ENCODE measurements at regions of chr11 and their contacts with region 1.

Region 1: DNA sequence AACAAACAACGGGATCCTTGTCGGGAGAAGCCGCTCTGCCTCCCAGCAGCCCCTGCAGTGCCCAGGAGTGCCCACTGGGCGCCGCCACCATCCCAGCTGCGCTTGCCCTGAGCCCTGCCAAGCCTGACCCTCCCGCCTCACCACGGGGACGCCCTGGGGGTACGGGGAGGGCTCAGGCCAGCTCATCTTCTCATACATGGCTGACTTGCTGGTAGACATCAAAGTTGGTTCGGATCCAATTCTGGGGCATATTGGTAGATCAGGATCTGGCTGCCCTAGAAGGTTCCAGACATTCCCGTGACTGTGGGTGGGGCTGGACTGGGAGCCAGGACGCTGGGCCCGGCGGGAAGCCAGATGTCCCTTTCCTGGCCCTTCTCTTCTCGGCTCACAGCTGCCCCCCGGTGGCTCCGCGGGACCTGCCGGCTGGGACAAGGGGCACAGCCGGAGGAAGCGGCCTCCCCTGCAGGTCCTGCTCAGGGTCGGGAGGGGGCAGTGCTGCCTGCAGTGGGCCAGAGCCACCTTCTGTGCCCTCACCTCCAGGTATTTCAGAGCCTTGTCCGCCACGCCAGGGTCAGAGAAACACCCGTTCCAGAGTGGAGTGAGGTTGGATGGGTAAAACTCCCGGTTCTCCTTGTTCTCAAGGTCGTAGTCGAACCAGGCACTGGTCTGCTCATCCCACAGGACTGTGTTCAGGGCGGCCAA is 10.6 kb upstream of the TREH start:
- DNase-seq: peak; percentile 97
- H3K4me3 Mint-ChIP-seq: peak overlapping the region; percentile 25
- H3K27ac Mint-ChIP-seq: peak overlapping the region; percentile 67
- H3K4me1 Mint-ChIP-seq: peaks cover 23% of the 10 kb centered on the region
- H3K27me3 Mint-ChIP-seq: no peaks in the 10 kb centered on the region
- CTCF ChIP-seq: peak; percentile 85

Region 2: DNA sequence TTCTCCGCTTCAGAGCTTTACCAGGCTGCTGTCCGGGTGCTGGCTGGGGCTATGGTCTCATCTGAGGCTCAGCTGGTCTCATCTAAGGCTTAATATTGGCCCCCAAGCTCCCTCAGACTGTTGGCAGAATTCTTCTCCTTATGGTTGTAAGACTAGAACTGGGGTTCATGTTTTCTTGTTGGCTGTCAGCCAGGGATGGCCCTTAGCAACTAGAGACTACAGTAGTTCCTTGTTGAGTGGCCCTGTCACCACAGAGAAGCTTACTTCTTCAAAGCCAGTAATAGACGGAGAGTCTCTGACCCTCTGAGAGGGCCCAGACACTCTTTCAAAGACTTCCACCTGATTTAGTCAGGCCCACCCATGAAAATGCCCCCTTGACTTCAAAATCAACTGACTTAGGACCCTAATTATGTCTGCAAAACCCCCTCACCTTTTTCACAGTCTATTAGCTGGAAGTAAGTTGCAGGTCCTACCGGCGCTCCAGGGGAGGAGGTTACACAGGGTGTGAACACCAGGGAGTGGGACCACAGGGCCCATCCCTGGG is 13.6 kb after region 1 on chr11:
- CTCF ChIA-PET with region 1: interaction called, 7 read pairs
- POLR2A ChIA-PET with region 1: interaction called, 15 read pairs
- intact Hi-C with region 1: no loop called
- DNase-seq: no peak
- H3K4me3 Mint-ChIP-seq: no peak overlapping the region
- H3K27ac Mint-ChIP-seq: no peak overlapping the region
- H3K4me1 Mint-ChIP-seq: no peaks in the 10 kb centered on the region
- H3K27me3 Mint-ChIP-seq: no peaks in the 10 kb centered on the region
- CTCF ChIP-seq: no peak

Region 3: GRCh38 chr11:118757876-118758399 is 67.9 kb after region 1 on chr11:
- CTCF ChIA-PET with region 1: interaction called, 11 read pairs
- POLR2A ChIA-PET with region 1: interaction called, 8 read pairs
- intact Hi-C with region 1: loop called (anchors 2 kb)
- DNase-seq: no peak
- H3K4me3 Mint-ChIP-seq: no peak overlapping the region
- H3K27ac Mint-ChIP-seq: no peak overlapping the region
- H3K4me1 Mint-ChIP-seq: no peaks in the 10 kb centered on the region
- H3K27me3 Mint-ChIP-seq: no peaks in the 10 kb centered on the region
- CTCF ChIP-seq: no peak

Region 4: GRCh38 chr11:118928108-118928870 is 238.3 kb after region 1 on chr11:
- CTCF ChIA-PET with region 1: interaction called, 43 read pairs
- POLR2A ChIA-PET with region 1: interaction called, 14 read pairs
- intact Hi-C with region 1: loop called (anchors 1 kb)
- DNase-seq: peak; percentile 95
- H3K4me3 Mint-ChIP-seq: peak overlapping the region; percentile 84
- H3K27ac Mint-ChIP-seq: peak overlapping the region; percentile 84
- H3K4me1 Mint-ChIP-seq: peaks cover 31% of the 10 kb centered on the region
- H3K27me3 Mint-ChIP-seq: no peaks in the 10 kb centered on the region
- CTCF ChIP-seq: peak; percentile 77